HCT116 (cell line): ENCODE measurements at regions of chr6 and their contacts with region 1.

Region 1: GRCh38 chr6:26312501-26313390 is 52.3 kb upstream of the BTN3A2 start:
- DNase-seq: peak; percentile 84
- ATAC-seq: peak; percentile 75
- H3K4me3 ChIP-seq: peak overlapping the region; percentile 28 to 34
- H3K27ac ChIP-seq: peak overlapping the region; percentile 44
- H3K4me1 ChIP-seq: peaks cover 23 to 62% of the 10 kb centered on the region in 2 experiments
- H3K27me3 ChIP-seq: no peaks in the 10 kb centered on the region
- CTCF ChIP-seq: no peak
- POLR2A ChIP-seq: no peak
- RAD21 ChIP-seq: no peak

Region 2: GRCh38 chr6:26204332-26205165 is 108.2 kb before region 1 on chr6:
- CTCF ChIA-PET with region 1: no interaction called
- POLR2A ChIA-PET with region 1: interaction called, 6 read pairs
- RAD21 ChIA-PET with region 1: no interaction called
- intact Hi-C with region 1: loop called (anchors 5 kb)
- DNase-seq: peak; percentile 98
- ATAC-seq: peak; percentile 72
- H3K4me3 ChIP-seq: peak overlapping the region; percentile 63 to 71
- H3K27ac ChIP-seq: peak overlapping the region; percentile 98
- H3K4me1 ChIP-seq: peaks cover 26 to 40% of the 10 kb centered on the region in 2 experiments
- H3K27me3 ChIP-seq: no peaks in the 10 kb centered on the region
- CTCF ChIP-seq: peak in 1 of 3 experiments; percentile 20; a peak in 2 of 6 replicates
- POLR2A ChIP-seq: peak; percentile 99
- RAD21 ChIP-seq: peak; percentile 2; the same call in 1 of the 2 replicates

Region 3: GRCh38 chr6:26322645-26323482 is 10.1 kb after region 1 on chr6:
- CTCF ChIA-PET with region 1: interaction called, 9 read pairs
- POLR2A ChIA-PET with region 1: no interaction called
- RAD21 ChIA-PET with region 1: no interaction called
- intact Hi-C with region 1: loop called (anchors 1 kb)
- DNase-seq: peak; percentile 82
- ATAC-seq: peak; percentile 68
- H3K4me3 ChIP-seq: peak overlapping the region; percentile 54 to 61; a peak in 3 of 4 replicates
- H3K27ac ChIP-seq: peak overlapping the region; percentile 81
- H3K4me1 ChIP-seq: peaks cover 8 to 38% of the 10 kb centered on the region in 2 experiments
- H3K27me3 ChIP-seq: no peaks in the 10 kb centered on the region
- CTCF ChIP-seq: no peak
- POLR2A ChIP-seq: no peak
- RAD21 ChIP-seq: no peak

Region 4: DNA sequence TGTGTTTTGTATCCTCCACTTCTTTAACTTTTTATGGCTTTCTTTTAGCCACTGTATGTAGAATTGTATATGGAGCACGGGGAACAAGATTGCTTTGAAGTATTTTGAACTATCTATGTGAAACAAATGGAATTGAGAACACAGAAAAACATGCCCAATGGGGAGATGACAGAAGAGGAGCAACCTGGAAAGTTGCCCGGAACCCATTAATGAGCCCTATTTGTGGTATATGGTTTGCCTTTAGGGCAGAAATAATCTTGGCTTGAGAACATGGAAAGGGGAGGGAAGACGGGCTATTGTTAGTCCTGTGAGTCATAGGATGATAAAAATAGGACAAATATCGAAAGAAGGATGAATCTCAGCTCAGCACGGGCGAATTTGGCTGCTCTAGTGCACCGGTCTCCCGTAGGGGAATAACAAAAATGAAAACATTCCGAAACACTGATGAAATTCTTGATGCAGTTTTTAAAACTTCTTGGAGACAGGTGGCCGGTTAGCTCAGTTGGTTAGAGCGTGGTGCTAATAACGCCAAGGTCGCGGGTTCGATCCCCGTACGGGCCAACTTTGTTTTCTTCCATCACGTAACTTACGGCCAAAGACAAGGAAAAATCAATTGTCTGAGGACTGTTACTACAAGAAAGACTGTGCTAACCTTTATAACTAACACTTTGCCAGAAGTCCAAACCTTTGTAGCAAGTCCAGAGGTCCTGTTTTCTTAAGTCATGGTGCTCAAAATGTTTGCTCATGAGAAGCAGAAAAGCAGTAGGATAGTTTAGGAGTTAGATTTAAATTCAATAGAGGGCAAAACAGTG is 241.1 kb after region 1 on chr6:
- CTCF ChIA-PET with region 1: interaction called, 3 read pairs
- POLR2A ChIA-PET with region 1: no interaction called
- RAD21 ChIA-PET with region 1: no interaction called
- intact Hi-C with region 1: loop called (anchors 5 kb)
- DNase-seq: peak; percentile 81
- ATAC-seq: peak; percentile 58
- H3K4me3 ChIP-seq: peak overlapping the region; percentile 36 to 50
- H3K27ac ChIP-seq: peak overlapping the region; percentile 53
- H3K4me1 ChIP-seq: peaks cover 14 to 45% of the 10 kb centered on the region in 2 experiments
- H3K27me3 ChIP-seq: no peaks in the 10 kb centered on the region
- CTCF ChIP-seq: no peak
- POLR2A ChIP-seq: no peak
- RAD21 ChIP-seq: peak; percentile 9; the same call in 1 of the 2 replicates